ENCODE measurements at regions of chr22 and their contacts with region 1.

Region 1: GRCh38 chr22:30005213-30005857 is 74.9 kb upstream of the HORMAD2 start:
- DNase-seq: peak; percentile 88
- H3K4me3 ChIP-seq: no peak overlapping the region
- H3K27ac ChIP-seq: no peak overlapping the region
- H3K4me1 ChIP-seq: no peaks in the 10 kb centered on the region
- H3K27me3 ChIP-seq: no peaks in the 10 kb centered on the region
- CTCF ChIP-seq: peak; percentile 97

Region 2: GRCh38 chr22:29635734-29636357 is 369.5 kb before region 1 on chr22:
- intact Hi-C with region 1: loop called (anchors 10 kb)
- DNase-seq: no peak
- H3K4me3 ChIP-seq: no peak overlapping the region
- H3K27ac ChIP-seq: no peak overlapping the region
- H3K4me1 ChIP-seq: no peaks in the 10 kb centered on the region
- H3K27me3 ChIP-seq: no peaks in the 10 kb centered on the region
- CTCF ChIP-seq: peak; percentile 48

Region 3: GRCh38 chr22:29689880-29690213 is 315.5 kb before region 1 on chr22:
- intact Hi-C with region 1: loop called (anchors 10 kb)
- DNase-seq: peak; percentile 71
- H3K4me3 ChIP-seq: no peak overlapping the region
- H3K27ac ChIP-seq: no peak overlapping the region
- H3K4me1 ChIP-seq: no peaks in the 10 kb centered on the region
- H3K27me3 ChIP-seq: no peaks in the 10 kb centered on the region
- CTCF ChIP-seq: peak; percentile 81

Region 4: GRCh38 chr22:29766632-29767170 is 238.6 kb before region 1 on chr22 and contains the start of gene ZMAT5:
- intact Hi-C with region 1: loop called (anchors 5 kb)
- DNase-seq: peak; percentile 97
- H3K4me3 ChIP-seq: peak within 1 kb of the TSS; percentile 84
- H3K27ac ChIP-seq: peak within 1 kb of the TSS; percentile 80
- H3K4me1 ChIP-seq: peaks cover 8% of the 10 kb centered on the region
- H3K27me3 ChIP-seq: no peaks in the 10 kb centered on the region
- CTCF ChIP-seq: no peak
- total RNA-seq, gene ZMAT5: 11.9 to 14.3 TPM

Region 5: DNA sequence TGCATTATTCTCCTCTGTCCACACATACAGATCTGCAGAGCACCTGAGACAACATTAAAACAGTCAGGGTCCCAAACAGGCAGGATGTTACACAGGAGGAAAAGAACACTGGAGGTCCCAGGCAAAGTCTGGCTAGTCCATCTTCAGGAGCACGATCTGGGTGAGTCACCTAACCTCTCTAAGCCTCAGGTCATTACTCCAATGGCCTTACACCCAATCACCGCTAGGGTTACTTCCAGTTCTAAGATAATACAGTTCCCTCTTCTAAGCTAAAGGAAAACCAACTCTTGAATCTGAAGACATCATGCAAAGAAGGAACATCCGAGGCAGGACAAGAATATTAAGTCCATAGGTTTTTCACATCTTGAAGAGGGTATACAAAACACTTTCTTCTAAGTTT is 191.8 kb before region 1 on chr22:
- intact Hi-C with region 1: loop called (anchors 10 kb)
- DNase-seq: no peak
- H3K4me3 ChIP-seq: no peak overlapping the region
- H3K27ac ChIP-seq: no peak overlapping the region
- H3K4me1 ChIP-seq: peaks cover 6% of the 10 kb centered on the region
- H3K27me3 ChIP-seq: no peaks in the 10 kb centered on the region
- CTCF ChIP-seq: no peak

Region 6: DNA sequence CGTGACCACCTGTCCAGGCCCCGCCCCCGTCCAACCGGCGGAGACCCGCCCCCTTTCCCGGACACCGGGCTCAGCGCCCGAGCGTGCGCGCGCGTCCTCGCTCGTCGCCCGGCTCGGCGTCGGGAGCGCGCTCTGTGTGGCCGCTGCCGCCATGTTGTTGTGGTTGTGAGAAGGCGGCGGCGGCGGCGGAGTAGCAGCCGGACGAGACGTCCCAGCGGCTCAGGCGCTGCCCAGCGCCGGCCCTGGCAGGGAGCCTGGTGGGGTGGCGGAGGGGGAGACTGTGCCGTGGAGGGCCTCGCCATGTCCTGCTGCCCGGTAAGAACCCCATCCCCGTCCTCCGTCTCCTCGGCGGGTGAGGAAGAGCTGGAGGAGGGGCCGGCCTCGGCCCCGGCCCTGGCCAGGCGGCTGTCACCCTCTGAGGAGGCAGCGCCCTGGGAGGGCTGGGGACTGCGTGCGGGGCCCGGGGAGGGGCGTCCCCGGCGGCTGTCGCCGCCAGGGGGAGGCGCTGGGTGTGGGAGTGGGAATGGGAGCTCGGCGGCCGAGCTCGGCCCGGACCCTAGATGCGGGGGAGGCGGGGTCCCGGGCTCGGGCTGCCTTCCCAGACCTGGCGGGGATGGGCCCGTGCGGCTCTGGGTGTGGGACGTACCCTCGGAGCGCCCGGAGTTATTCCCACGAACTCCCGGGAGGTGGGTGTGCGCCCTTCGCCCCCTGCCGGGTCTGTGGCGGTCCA is 122.1 kb before region 1 on chr22 and contains the start of gene MTMR3:
- intact Hi-C with region 1: loop called (anchors 10 kb)
- DNase-seq: peak; percentile 98
- H3K4me3 ChIP-seq: peak within 1 kb of the TSS; percentile 70
- H3K27ac ChIP-seq: peak within 1 kb of the TSS; percentile 88
- H3K4me1 ChIP-seq: no peaks in the 10 kb centered on the region
- H3K27me3 ChIP-seq: no peaks in the 10 kb centered on the region
- CTCF ChIP-seq: peak; percentile 35
- total RNA-seq, gene MTMR3: 35.9 to 49.4 TPM

Region 7: GRCh38 chr22:30104501-30105156 is 99.3 kb after region 1 on chr22:
- intact Hi-C with region 1: no loop called
- DNase-seq: no peak
- H3K4me3 ChIP-seq: no peak overlapping the region
- H3K27ac ChIP-seq: no peak overlapping the region
- H3K4me1 ChIP-seq: no peaks in the 10 kb centered on the region
- H3K27me3 ChIP-seq: no peaks in the 10 kb centered on the region
- CTCF ChIP-seq: no peak

Measured in colonic mucosa (tissue), 4 donors.